Mammary epithelial cell (primary cell): ENCODE measurements at regions of chr6 and their contacts with region 1.

Region 1: GRCh38 chr6:30752157-30752927 is 8.0 kb upstream of the IER3 start:
- DNase-seq: peak; percentile 100
- H3K4me3 ChIP-seq: no peak overlapping the region
- H3K27ac ChIP-seq: peak overlapping the region; percentile 97
- H3K4me1 ChIP-seq: peaks cover 61% of the 10 kb centered on the region
- H3K27me3 ChIP-seq: no peaks in the 10 kb centered on the region
- CTCF ChIP-seq: peak in 1 of 2 donors; percentile 29

Region 2: GRCh38 chr6:29516108-29516507 is 1236.2 kb before region 1 on chr6:
- CTCF ChIA-PET with region 1: no interaction called
- dilution Hi-C with region 1: no loop called
- in situ Hi-C with region 1: no loop called
- intact Hi-C with region 1: no loop called
- DNase-seq: peak; percentile 93
- H3K4me3 ChIP-seq: no peak overlapping the region
- H3K27ac ChIP-seq: no peak overlapping the region
- H3K4me1 ChIP-seq: no peaks in the 10 kb centered on the region
- H3K27me3 ChIP-seq: no peaks in the 10 kb centered on the region
- CTCF ChIP-seq: no peak

Region 3: GRCh38 chr6:30763302-30764193 is 11.2 kb after region 1 on chr6:
- CTCF ChIA-PET with region 1: interaction called, 3 read pairs
- dilution Hi-C with region 1: no loop called
- in situ Hi-C with region 1: no loop called
- intact Hi-C with region 1: loop called (anchors 1 kb)
- DNase-seq: no peak
- H3K4me3 ChIP-seq: no peak overlapping the region
- H3K27ac ChIP-seq: peak overlapping the region; percentile 66
- H3K4me1 ChIP-seq: peaks cover 45% of the 10 kb centered on the region
- H3K27me3 ChIP-seq: no peaks in the 10 kb centered on the region
- CTCF ChIP-seq: no peak

Region 4: DNA sequence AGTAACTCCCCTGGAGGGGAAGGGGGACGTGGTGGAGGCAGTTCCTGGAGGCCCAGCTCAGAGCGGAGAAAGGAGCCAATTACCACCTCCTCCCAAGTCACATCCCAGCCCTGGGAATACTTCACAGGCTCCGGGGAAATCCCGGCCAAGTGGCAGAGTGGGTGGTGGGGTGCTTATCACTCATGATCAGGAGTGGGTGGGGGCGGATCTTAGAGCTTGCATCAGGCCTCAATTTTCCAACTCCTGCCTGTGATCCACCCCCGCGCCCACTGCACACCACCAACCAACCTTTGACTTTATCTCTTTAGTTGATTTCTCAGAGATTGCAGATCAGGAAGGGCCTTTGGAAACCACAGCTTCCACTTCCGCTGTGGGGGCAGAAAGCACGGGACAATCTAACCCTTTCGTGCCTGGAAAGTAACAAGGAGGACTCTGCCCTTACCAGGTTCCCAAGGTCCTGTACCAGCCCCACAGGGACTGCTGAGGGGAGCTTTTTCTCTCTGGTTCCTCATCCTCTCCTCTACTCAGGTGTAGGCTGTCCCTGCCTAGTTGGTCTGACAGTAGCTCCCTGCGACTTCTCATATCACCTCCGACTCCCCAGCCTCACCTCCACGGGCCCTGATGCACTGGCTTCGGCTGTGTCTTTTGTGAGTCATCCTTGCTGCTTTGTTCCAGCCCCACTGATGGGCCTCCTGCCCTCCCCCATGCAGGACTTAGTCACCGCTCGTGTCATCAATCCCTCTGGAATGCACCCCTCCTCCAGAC is 16.9 kb after region 1 on chr6:
- CTCF ChIA-PET with region 1: no interaction called
- dilution Hi-C with region 1: no loop called
- in situ Hi-C with region 1: no loop called
- intact Hi-C with region 1: loop called (anchors 1 kb)
- DNase-seq: peak; percentile 95
- H3K4me3 ChIP-seq: peak overlapping the region in 1 of 3 experiments; percentile 22
- H3K27ac ChIP-seq: peak overlapping the region; percentile 97
- H3K4me1 ChIP-seq: peaks cover 31% of the 10 kb centered on the region
- H3K27me3 ChIP-seq: no peaks in the 10 kb centered on the region
- CTCF ChIP-seq: no peak

Region 5: DNA sequence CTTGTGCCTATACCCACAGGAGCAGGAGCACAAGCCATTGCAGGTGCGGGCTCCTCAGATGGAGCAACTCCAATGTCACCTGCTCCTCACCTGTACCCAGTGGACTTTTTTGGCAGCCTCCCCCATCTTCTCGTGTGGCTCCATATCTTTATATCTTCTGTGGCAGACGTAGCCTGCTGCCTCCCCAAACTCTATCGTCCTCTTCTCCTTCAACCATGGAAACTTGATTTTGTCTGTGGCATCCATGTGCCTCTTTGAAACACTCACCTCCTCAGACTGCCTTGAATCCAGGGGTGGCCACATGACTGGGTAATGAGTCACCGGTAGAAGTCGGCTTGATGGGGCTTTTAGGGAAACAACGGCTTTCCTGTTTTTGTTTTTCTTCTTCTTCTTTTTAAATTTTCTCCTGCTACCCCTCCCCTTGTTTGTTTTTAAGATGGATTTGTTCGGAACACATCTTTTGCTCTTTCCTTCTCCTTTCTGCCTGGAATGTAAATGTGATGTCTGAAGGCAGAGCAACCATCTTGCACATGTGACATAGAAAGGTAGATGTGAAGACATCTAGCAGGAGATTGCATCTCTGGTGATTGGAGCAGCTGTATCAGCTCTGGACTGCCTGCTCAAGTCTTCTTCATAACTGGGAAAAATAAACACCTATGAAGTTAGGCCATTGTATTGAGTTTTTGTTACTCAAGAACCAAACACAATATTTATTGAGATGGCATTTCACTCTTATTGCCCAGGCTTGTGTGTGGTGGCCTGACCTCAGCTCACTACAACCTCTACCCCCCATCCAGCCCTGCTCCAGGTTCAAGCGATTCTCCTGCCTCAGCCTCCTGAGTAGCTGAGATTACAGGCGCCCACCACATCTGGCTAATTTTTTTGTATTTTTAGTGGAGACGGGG is 62.0 kb after region 1 on chr6:
- CTCF ChIA-PET with region 1: interaction called, 6 read pairs
- dilution Hi-C with region 1: no loop called
- in situ Hi-C with region 1: loop called (anchors 5 kb)
- intact Hi-C with region 1: loop called (anchors 1 kb)
- DNase-seq: peak; percentile 88
- H3K4me3 ChIP-seq: no peak overlapping the region
- H3K27ac ChIP-seq: peak overlapping the region; percentile 72
- H3K4me1 ChIP-seq: peaks cover 51% of the 10 kb centered on the region
- H3K27me3 ChIP-seq: no peaks in the 10 kb centered on the region
- CTCF ChIP-seq: no peak

Region 6: GRCh38 chr6:30862156-30862875 is 110.0 kb after region 1 on chr6:
- CTCF ChIA-PET with region 1: no interaction called
- dilution Hi-C with region 1: loop called (anchors 5 kb)
- in situ Hi-C with region 1: no loop called
- intact Hi-C with region 1: no loop called
- DNase-seq: no peak
- H3K4me3 ChIP-seq: no peak overlapping the region
- H3K27ac ChIP-seq: no peak overlapping the region
- H3K4me1 ChIP-seq: no peaks in the 10 kb centered on the region
- H3K27me3 ChIP-seq: no peaks in the 10 kb centered on the region
- CTCF ChIP-seq: no peak